Upper lobe of right lung (tissue), 1 donor: ENCODE measurements at regions of chr1 and their contacts with region 1.

Region 1: DNA sequence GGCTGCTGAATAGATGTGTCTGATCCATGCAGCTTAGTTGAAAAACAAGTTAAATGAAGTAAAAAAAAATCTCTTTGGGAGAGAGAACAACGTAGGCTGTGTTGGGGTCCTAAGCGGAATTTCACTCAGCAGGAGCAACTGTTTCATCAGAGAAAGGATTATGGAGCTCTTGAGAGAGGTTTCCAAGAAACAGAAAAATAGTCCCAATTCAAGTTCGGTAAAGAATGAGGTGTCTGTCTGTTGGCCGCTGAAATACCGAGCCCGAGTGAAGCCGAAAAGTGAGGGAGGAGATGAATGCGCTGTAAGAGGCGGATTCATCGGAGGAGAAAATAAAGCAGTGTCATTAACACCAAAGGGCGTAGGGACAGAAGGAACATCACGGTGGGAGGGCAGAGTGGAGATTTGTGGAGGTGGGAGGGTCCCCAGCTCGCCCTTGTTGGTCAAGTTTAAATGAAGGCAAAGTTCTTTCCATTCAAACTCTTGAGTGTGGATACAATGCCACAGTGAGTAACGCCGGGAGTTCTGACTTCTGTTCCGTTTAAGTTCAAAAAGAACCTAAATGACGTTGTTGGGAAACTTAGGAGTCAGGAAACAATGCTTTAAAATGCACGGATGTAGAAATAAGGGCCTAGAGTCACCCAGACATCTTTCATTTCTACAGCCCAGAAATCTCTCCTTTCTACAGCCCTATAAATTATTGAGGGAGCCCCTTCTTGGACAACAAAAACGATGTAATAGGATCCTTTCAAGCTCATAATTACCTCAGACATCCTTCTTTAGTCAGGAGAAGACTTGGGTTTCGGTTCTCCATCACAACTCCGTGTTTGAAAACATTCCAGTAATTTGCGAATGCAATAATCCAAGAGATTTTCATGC is 15.6 kb upstream of the SLC45A1 start:
- DNase-seq: no peak
- ATAC-seq: no peak
- H3K4me3 ChIP-seq: no peak overlapping the region
- H3K27ac ChIP-seq: no peak overlapping the region
- H3K4me1 ChIP-seq: no peaks in the 10 kb centered on the region
- H3K27me3 ChIP-seq: no peaks in the 10 kb centered on the region
- CTCF ChIP-seq: no peak

Region 2: GRCh38 chr1:8142955-8143629 is 159.2 kb before region 1 on chr1:
- intact Hi-C with region 1: no loop called
- DNase-seq: no peak
- ATAC-seq: no peak
- H3K4me3 ChIP-seq: no peak overlapping the region
- H3K27ac ChIP-seq: no peak overlapping the region
- H3K4me1 ChIP-seq: no peaks in the 10 kb centered on the region
- H3K27me3 ChIP-seq: no peaks in the 10 kb centered on the region
- CTCF ChIP-seq: no peak

Region 3: DNA sequence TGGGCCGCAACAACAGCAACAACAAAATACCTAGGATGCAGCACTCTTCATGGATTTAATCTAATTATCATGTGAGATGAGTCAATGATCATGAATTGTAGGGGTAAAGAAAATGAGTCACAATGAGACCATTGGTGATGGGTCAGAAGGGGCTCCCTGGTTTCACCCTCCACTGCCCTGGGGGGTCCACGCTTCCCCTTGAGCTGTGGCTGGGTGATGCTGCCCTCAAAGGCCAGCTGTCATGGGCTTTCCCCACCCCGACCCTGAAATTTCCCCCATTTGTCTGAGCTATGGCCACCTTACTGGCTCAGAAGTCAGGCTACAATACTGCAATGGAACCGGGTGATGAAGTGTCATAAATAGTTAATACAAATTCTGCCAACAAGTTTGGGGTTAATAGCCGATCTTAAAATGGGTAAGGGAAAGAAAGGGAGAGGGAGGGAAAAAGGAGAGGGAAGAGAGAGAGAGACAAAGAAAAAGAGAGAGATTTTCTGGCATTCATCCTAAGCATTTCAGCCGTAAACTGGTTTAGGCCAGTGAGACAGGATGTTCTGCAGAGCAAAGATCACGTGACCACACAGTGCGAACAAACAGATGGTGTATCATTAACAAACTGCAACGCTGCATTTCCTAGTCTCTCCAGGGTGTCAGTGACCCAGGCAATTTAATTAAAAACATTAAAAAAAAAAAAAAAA is 132.8 kb before region 1 on chr1:
- intact Hi-C with region 1: no loop called
- DNase-seq: peak; percentile 51
- ATAC-seq: peak; percentile 81
- H3K4me3 ChIP-seq: no peak overlapping the region
- H3K27ac ChIP-seq: peak overlapping the region; percentile 78
- H3K4me1 ChIP-seq: peaks cover 19% of the 10 kb centered on the region
- H3K27me3 ChIP-seq: no peaks in the 10 kb centered on the region
- CTCF ChIP-seq: no peak

Region 4: DNA sequence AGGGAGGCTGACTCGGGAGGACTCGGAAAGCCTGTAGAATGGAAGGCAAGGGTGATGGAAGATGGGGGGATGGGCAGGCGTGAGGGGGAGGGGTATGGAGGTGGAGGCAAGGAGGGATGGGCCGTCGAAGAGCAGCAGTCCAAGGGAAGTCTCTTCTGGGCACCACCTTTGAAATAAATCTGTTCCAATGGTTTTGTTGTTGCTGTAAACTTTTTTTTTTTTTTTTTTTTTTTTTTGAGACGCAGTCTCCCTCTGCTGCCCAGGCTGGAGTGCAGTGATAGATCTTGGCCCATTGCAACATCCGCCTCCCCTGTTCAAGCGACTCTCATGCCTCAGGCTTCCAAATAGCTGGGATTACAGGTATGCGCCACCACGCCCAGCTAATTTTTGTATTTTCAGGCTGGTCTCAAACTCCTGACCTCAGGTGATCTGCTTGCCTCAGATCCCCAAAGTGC is 63.4 kb before region 1 on chr1:
- intact Hi-C with region 1: loop called (anchors 10 kb)
- DNase-seq: peak; percentile 73
- ATAC-seq: peak; percentile 87
- H3K4me3 ChIP-seq: no peak overlapping the region
- H3K27ac ChIP-seq: peak overlapping the region; percentile 17
- H3K4me1 ChIP-seq: peaks cover 10% of the 10 kb centered on the region
- H3K27me3 ChIP-seq: no peaks in the 10 kb centered on the region
- CTCF ChIP-seq: peak; percentile 42

Region 5: DNA sequence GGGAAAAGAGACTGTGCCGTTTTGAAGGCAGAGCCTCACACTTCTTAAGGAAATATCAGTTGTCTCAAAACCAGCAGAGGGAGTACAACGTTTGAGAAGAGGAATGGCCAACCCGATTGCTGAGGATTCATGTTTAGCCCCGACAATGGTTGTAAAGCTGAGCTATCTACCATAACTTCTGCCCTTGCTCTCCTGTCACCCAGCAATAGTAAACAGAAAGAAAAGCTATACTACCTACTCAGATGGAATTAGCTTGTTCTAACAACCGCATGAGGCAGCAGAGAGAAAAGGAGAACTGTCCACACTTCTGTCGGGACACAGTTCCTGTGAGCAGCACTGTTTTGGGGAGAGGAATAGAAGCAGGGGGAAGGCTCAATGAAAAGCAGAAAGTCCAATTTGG is 106.8 kb after region 1 on chr1:
- intact Hi-C with region 1: no loop called
- DNase-seq: no peak
- ATAC-seq: peak; percentile 79
- H3K4me3 ChIP-seq: no peak overlapping the region
- H3K27ac ChIP-seq: peak overlapping the region; percentile 82
- H3K4me1 ChIP-seq: peaks cover 70% of the 10 kb centered on the region
- H3K27me3 ChIP-seq: no peaks in the 10 kb centered on the region
- CTCF ChIP-seq: peak; percentile 48